A549 (cell line): ENCODE measurements at regions of chr1 and their contacts with region 1.

Region 1: GRCh38 chr1:151534665-151535278 is 5.3 kb upstream of the TUFT1 start:
- DNase-seq: peak; percentile 74 to 77
- ATAC-seq: peak; percentile 71 to 82
- H3K4me3 ChIP-seq: no peak overlapping the region
- H3K27ac ChIP-seq: peak overlapping the region; percentile 26 to 84; a peak in 4 of 6 replicates
- H3K4me1 ChIP-seq: peaks cover 51% of the 10 kb centered on the region
- CTCF ChIP-seq: peak; percentile 93
- EP300 ChIP-seq: no peak
- POLR2A ChIP-seq: no peak
- RAD21 ChIP-seq: peak; percentile 93 to 97

Region 2: DNA sequence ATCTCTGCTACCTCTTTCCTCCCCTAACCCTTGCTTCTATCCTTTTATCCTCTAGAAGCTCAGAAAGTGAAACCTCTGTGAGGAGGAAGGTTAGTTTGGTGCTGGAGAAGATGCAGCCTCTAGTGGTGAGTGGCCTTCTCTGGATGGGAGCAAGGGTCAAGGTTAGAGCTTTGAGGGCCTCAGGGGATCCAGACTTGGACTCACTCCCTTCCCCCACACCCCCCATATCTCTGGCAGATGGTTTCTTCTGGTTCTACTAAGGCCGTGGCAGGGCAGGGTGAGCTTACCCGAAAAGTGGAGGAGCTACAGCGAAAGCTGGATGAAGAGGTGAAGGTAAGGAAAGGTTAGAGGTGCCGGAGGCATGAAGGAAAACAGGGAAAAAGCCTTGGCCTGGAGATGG is 14.4 kb before region 1 on chr1:
- CTCF ChIA-PET with region 1: interaction called, 47 read pairs
- POLR2A ChIA-PET with region 1: no interaction called
- DNase-seq: no peak
- ATAC-seq: peak in 1 of 2 experiments; percentile 28; a peak in 1 of 6 replicates
- H3K4me3 ChIP-seq: no peak overlapping the region
- H3K27ac ChIP-seq: no peak overlapping the region
- H3K4me1 ChIP-seq: peaks cover 4% of the 10 kb centered on the region; the same call in 2 of the 3 replicates
- CTCF ChIP-seq: no peak
- EP300 ChIP-seq: no peak
- POLR2A ChIP-seq: no peak
- RAD21 ChIP-seq: no peak

Region 3: DNA sequence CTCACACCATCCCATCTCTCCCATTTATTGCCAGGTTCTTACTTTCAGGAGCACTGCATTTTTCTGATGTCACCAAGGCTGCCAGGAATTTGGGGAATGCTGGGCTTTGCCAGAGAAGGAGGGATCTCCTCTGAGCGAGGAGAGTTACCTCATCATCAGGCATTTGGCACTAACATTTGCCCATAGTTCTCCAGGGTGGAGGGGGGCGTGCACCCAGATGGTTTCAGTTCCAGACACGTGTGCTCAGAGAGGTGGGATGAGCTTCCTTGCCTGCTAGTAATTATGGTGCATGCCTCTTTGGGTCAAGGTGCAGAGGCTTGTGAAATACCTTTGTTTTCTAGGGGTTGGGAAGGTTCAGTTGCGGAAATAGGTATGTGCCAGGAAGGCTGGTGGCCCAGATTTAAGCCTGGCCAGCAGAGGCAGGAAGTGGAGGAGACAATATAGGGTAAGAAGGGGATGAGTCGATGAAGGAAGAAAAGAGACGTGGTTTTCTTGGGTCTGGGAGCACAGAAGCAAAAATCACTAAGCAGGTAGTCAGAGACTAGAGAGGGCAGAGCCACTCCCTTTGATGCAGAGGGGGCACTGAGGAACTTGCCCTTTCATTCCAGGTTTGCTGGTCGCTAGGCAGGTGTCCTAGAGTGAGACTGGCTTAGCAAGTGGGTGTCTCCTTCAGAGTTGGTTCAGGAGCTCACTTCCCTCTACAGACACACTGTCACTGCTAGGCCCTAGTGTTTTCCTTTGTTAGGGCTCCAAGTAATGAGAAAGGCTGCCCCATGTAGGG is 12.5 kb after region 1 on chr1:
- CTCF ChIA-PET with region 1: interaction called, 15 read pairs
- POLR2A ChIA-PET with region 1: interaction called, 44 read pairs
- DNase-seq: peak; percentile 88 to 95
- ATAC-seq: peak; percentile 82 to 86
- H3K4me3 ChIP-seq: peak overlapping the region; percentile 0; the same call in 1 of the 3 replicates
- H3K27ac ChIP-seq: peak overlapping the region; percentile 85 to 91
- H3K4me1 ChIP-seq: peaks cover 83% of the 10 kb centered on the region
- CTCF ChIP-seq: no peak
- EP300 ChIP-seq: peak; percentile 63 to 84; a peak in 4 of 5 replicates
- POLR2A ChIP-seq: no peak
- RAD21 ChIP-seq: 0 out of 5 replicates have a peak, but pooled peaks of 1 of the 2 experiments have one; percentile 26

Region 4: DNA sequence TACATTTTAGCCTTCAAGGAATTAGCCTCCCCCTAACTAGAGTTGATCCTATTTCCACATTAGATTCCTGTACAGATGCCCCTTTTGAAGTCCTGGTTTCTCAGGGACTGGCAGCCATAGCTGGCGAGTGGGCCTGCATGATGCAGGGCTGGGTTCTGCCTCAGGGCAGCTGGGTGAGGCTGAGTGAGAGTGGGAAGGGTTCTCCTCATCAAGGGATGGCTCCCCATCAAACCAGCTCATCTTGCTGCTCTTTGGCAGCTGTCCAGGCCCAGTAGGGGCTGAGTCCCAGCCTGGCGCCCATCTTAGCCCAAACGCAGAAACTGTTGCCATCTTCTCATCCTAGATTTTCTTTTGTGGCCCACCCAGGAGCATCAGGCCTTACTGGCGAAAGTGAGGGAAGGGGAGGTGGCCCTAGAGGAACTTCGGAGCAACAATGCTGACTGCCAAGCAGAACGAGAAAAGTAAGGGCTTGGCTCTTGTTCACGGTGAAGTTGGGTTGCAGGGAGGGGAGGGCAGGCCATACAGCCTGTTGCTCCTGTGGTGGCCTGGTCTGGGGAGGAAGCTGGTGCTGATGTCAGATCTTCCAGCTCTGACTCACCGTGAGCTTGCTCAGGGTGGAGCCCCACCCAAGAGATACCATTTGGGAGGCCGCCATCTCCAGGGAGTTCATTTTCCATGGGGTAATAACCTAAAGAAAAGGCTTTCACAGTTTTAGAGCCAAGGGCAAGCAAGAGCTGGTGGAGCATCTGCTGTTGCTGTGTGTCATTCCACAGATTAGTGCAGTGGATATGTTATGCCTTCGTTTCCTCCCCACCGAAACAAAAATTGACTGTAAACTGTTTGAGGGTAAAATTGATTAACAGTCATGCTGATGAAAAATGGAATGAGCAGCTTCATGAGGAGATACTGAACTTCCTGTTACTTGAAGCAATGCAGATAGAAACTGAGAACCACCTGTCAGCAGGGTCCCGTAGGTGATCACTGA is 40.1 kb after region 1 on chr1:
- CTCF ChIA-PET with region 1: interaction called, 10 read pairs
- POLR2A ChIA-PET with region 1: interaction called, 5 read pairs
- DNase-seq: peak; percentile 67 to 72
- ATAC-seq: peak; percentile 73 to 81
- H3K4me3 ChIP-seq: no peak overlapping the region
- H3K27ac ChIP-seq: peak overlapping the region; percentile 48 to 78; a peak in 5 of 6 replicates
- H3K4me1 ChIP-seq: peaks cover 51% of the 10 kb centered on the region
- CTCF ChIP-seq: no peak
- EP300 ChIP-seq: no peak
- POLR2A ChIP-seq: no peak
- RAD21 ChIP-seq: no peak